Transverse colon (tissue), 4 donors: ENCODE measurements at regions of chr17 and their contacts with region 1.

Region 1: DNA sequence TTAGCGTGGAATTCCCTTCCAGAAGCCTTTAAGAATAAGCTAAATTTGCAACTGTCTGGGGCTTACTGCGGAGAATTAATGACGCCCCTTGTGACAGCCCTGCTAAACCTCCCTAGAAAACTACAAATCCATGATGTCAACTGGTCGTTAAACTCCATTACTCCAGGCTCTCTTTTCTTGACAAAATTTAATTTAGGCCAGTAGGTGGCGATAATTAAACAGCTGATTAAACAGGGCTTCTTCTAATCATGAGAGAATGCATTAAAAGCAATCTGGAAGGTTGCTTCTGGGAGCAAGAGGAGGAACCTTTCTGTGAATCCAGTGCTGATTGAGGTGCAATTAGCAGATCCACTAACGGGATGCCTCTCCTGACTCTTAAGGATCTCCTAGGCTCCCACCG is 8.1 kb upstream of the NLRP1 start:
- DNase-seq: no peak
- H3K4me3 ChIP-seq: no peak overlapping the region
- H3K27ac ChIP-seq: no peak overlapping the region
- H3K4me1 ChIP-seq: no peaks in the 10 kb centered on the region
- H3K27me3 ChIP-seq: peaks cover 34% of the 10 kb centered on the region
- CTCF ChIP-seq: peak; percentile 55 to 62 (median 58)
- EP300 ChIP-seq: no peak
- POLR2A ChIP-seq: no peak

Region 2: GRCh38 chr17:5694551-5694950 is 102.2 kb after region 1 on chr17:
- in situ Hi-C with region 1: loop called in 1 of 4 experiments (anchors 10 kb)
- intact Hi-C with region 1: no loop called
- DNase-seq: no peak
- H3K4me3 ChIP-seq: no peak overlapping the region
- H3K27ac ChIP-seq: no peak overlapping the region
- H3K4me1 ChIP-seq: no peaks in the 10 kb centered on the region
- H3K27me3 ChIP-seq: peaks cover 12% of the 10 kb centered on the region
- CTCF ChIP-seq: no peak
- EP300 ChIP-seq: no peak
- POLR2A ChIP-seq: no peak

Region 3: GRCh38 chr17:7435221-7435675 is 1842.9 kb after region 1 on chr17 and contains the start of gene TMEM102:
- in situ Hi-C with region 1: no loop called
- intact Hi-C with region 1: no loop called
- DNase-seq: peak; percentile 98
- H3K4me3 ChIP-seq: peak within 1 kb of the TSS; percentile 33 to 79 (median 53)
- H3K27ac ChIP-seq: peak within 1 kb of the TSS; percentile 82 to 90 (median 87)
- H3K4me1 ChIP-seq: peaks cover 22 to 44% (median 37%) of the 10 kb centered on the region in 4 donors
- H3K27me3 ChIP-seq: peaks cover 25% of the 10 kb centered on the region
- CTCF ChIP-seq: no peak
- EP300 ChIP-seq: no peak
- POLR2A ChIP-seq: peak; percentile 82
- total RNA-seq, gene TMEM102: 8.8 to 26.1 (median 16.3) TPM